ENCODE measurements at regions of chr3 and their contacts with region 1.

Region 1: GRCh38 chr3:125679258-125679657 is 84.0 kb upstream of the OSBPL11 start:
- DNase-seq: no peak
- H3K4me3 ChIP-seq: no peak overlapping the region
- H3K4me3 Mint-ChIP-seq: no peak overlapping the region
- H3K27ac ChIP-seq: no peak overlapping the region
- H3K27ac Mint-ChIP-seq: peak overlapping the region in 1 of 7 donors; percentile 18
- H3K4me1 ChIP-seq: peaks cover 6 to 7% of the 10 kb centered on the region in 2 donors
- H3K4me1 Mint-ChIP-seq: peaks cover 11% of the 10 kb centered on the region
- H3K27me3 ChIP-seq: no peaks in the 10 kb centered on the region
- H3K27me3 Mint-ChIP-seq: peaks cover 0 to 2% (median 1%) of the 10 kb centered on the region in 3 donors
- CTCF ChIP-seq: no peak

Region 2: DNA sequence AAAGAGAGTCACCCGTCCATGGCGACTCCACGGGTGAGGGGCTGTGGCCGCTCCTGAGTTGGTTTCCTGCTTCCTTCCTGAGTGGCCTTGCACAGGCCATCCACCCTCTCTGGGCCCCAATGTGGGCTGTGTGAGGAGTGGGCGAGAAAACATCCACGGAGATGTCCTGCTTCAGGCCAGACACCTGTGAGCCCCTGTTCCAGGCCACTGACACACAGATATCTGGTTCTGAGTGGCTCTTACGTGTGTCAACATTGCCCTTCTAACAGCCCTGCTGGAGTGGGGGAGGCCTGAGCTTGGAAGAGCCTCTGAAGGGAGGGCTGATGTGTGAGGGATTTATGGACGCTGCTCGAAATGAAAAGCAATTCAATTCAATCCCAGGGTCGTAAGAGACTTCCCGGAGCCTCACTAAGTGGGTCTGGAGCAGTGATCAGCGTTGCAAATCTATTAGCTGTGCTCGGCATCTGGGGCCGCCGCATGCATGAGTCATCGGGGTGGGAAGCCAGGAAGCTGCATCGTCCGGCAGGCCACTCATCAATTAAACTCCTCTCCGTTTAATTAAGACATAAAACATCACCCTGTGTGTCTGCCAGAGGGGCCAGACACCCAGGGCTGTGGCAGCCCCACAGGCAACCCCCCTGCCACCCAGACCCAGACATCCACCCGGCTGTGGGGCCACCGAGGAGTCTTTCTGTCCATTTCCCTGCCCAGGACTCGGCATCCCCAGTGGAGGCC is 1493.7 kb after region 1 on chr3:
- intact Hi-C with region 1: loop called in 1 of 2 experiments (anchors 10 kb)
- DNase-seq: no peak
- H3K4me3 ChIP-seq: no peak overlapping the region
- H3K4me3 Mint-ChIP-seq: peak overlapping the region in 1 of 2 donors; percentile 48
- H3K27ac ChIP-seq: no peak overlapping the region
- H3K27ac Mint-ChIP-seq: no peak overlapping the region
- H3K4me1 ChIP-seq: no peaks in the 10 kb centered on the region
- H3K4me1 Mint-ChIP-seq: peaks cover 6% of the 10 kb centered on the region
- H3K27me3 ChIP-seq: peaks cover 0 to 7% of the 10 kb centered on the region in 2 donors
- H3K27me3 Mint-ChIP-seq: peaks cover 9 to 29% (median 13%) of the 10 kb centered on the region in 3 donors
- CTCF ChIP-seq: no peak